ENCODE measurements at regions of chr2 and their contacts with region 1.

Region 1: GRCh38 chr2:131475831-131476230 is at the start of gene TUBA3D:
- DNase-seq: no peak
- ATAC-seq: no peak
- H3K4me3 ChIP-seq: no peak within 1 kb of the TSS
- H3K27ac ChIP-seq: no peak within 1 kb of the TSS
- H3K4me1 ChIP-seq: peaks cover 4 to 7% of the 10 kb centered on the region in 2 experiments; a peak in 3 of 5 replicates
- H3K27me3 ChIP-seq: no peaks in the 10 kb centered on the region
- CTCF ChIP-seq: no peak
- EP300 ChIP-seq: no peak
- POLR2A ChIP-seq: no peak
- RAD21 ChIP-seq: no peak
- polyA plus RNA-seq, gene TUBA3D: not detected

Region 2: DNA sequence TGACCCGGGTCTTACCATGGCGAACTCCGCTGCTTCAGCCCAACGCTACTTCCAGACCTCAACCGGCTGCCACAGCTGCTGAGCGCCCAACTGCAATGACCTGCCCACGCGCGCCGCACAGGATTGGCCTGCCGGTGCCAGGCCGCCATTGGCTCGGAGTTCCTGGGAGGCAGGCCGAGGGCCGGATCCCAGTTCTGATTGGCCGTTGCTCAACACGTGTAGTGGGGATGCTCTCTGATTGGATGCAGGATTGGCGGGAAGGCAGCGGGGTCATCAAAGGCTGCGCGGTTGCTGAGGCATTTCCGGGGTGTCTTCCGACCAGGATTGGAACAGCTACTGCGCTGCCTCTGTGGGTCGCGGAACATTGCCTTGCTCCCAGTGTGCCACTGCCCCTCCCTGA is 1277.5 kb before region 1 on chr2 and contains the start of gene TUBA3E:
- CTCF ChIA-PET with region 1: no interaction called
- POLR2A ChIA-PET with region 1: no interaction called
- in situ Hi-C with region 1: loop called (anchors 5 kb)
- intact Hi-C with region 1: no loop called
- DNase-seq: no peak
- ATAC-seq: no peak
- H3K4me3 ChIP-seq: no peak within 1 kb of the TSS
- H3K27ac ChIP-seq: no peak within 1 kb of the TSS
- H3K4me1 ChIP-seq: peaks cover 7 to 8% of the 10 kb centered on the region in 2 experiments; a peak in 4 of 5 replicates
- H3K27me3 ChIP-seq: no peaks in the 10 kb centered on the region
- CTCF ChIP-seq: no peak
- EP300 ChIP-seq: no peak
- POLR2A ChIP-seq: no peak
- RAD21 ChIP-seq: no peak
- polyA plus RNA-seq, gene TUBA3E: 0.13 TPM in 1 of 2 experiments, not detected in the other

Measured in K562 (cell line).